H1 (cell line): ENCODE measurements at regions of chr6 and their contacts with region 1.

Region 1: GRCh38 chr6:42068872-42069523 is 18.7 kb downstream of the TAF8 start:
- DNase-seq: no peak
- H3K4me3 ChIP-seq: no peak overlapping the region
- H3K27ac ChIP-seq: no peak overlapping the region
- H3K4me1 ChIP-seq: no peaks in the 10 kb centered on the region
- H3K27me3 ChIP-seq: no peaks in the 10 kb centered on the region
- CTCF ChIP-seq: peak in 2 of 3 experiments; percentile 18 to 32; a peak in 2 of 4 replicates
- EP300 ChIP-seq: no peak
- POLR2A ChIP-seq: no peak
- RAD21 ChIP-seq: peak in 1 of 2 experiments; percentile 18; a peak in 1 of 4 replicates

Region 2: GRCh38 chr6:41813469-41813868 is 255.5 kb before region 1 on chr6:
- CTCF ChIA-PET with region 1: no interaction called
- POLR2A ChIA-PET with region 1: no interaction called
- DNase-seq: no peak
- H3K4me3 ChIP-seq: no peak overlapping the region
- H3K27ac ChIP-seq: no peak overlapping the region
- H3K4me1 ChIP-seq: no peaks in the 10 kb centered on the region
- H3K27me3 ChIP-seq: no peaks in the 10 kb centered on the region
- CTCF ChIP-seq: no peak
- EP300 ChIP-seq: no peak
- POLR2A ChIP-seq: no peak
- RAD21 ChIP-seq: no peak

Region 3: GRCh38 chr6:42050266-42051032 is 18.5 kb before region 1 on chr6 and contains the start of gene TAF8:
- CTCF ChIA-PET with region 1: interaction called, 6 read pairs
- POLR2A ChIA-PET with region 1: interaction called, 12 read pairs
- DNase-seq: peak; percentile 79 to 91
- H3K4me3 ChIP-seq: peak within 1 kb of the TSS; percentile 85 to 99 (median 90)
- H3K27ac ChIP-seq: peak within 1 kb of the TSS; percentile 95
- H3K4me1 ChIP-seq: peaks cover 13 to 16% (median 14%) of the 10 kb centered on the region in 4 experiments
- H3K27me3 ChIP-seq: peaks cover 38 to 45% (median 42%) of the 10 kb centered on the region in 4 experiments
- CTCF ChIP-seq: no peak; a peak in 1 of 4 replicates
- EP300 ChIP-seq: no peak
- POLR2A ChIP-seq: peak in 1 of 2 experiments; percentile 100; a peak in 2 of 3 replicates
- RAD21 ChIP-seq: 0 out of 4 replicates have a peak, but pooled peaks of 1 of the 2 experiments have one; percentile 4
- total RNA-seq, gene TAF8: 32.7 and 34.0 TPM in 2 replicates